ENCODE measurements at regions of chr1 and their contacts with region 1.

Region 1: GRCh38 chr1:204928671-204929486 is 58.2 kb downstream of the NFASC start:
- DNase-seq: no peak
- ATAC-seq: no peak
- H3K4me3 Mint-ChIP-seq: no peak overlapping the region
- H3K27ac Mint-ChIP-seq: no peak overlapping the region
- H3K4me1 Mint-ChIP-seq: no peaks in the 10 kb centered on the region
- H3K27me3 Mint-ChIP-seq: peaks cover 18% of the 10 kb centered on the region

Region 2: DNA sequence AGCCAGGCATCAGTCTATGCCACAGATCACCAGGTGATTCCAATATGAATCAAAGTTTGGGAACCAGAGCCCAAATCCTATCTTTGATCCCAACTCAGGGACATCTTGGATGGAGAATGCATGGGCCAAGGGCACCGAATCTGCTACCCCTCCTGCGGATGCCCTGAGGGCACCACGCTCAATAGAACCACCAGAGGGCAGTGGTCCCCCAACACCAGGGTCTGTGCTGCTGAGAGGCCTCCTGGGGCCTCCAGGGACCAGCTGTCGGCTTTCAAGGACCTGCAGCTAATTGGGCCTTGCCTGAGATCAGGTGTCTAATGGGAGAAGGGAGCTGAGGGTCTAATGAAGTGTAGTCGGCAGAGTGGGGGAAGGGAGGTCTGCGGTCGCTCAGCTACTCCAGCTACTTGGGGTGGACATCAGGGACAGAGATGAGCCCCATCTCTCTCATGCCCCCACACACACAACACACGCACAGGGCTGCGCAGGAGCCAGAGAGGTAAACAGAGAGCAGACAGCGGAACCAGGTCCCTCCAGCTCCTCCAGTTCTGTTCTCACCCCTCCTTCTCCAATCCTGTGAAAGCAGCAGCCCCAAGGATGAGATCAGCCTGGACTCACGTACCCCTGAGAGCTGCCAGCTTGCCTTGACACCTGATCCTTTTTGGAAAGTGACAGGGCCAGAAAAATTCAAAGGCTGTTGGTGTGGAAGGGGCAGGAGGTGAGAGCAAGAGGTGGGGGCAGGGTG is 482.3 kb before region 1 on chr1:
- CTCF ChIA-PET with region 1: no interaction called
- DNase-seq: peak; percentile 84
- ATAC-seq: peak; percentile 93
- H3K4me3 Mint-ChIP-seq: no peak overlapping the region
- H3K27ac Mint-ChIP-seq: peak overlapping the region; percentile 74
- H3K4me1 Mint-ChIP-seq: peaks cover 33% of the 10 kb centered on the region
- H3K27me3 Mint-ChIP-seq: no peaks in the 10 kb centered on the region

Region 3: DNA sequence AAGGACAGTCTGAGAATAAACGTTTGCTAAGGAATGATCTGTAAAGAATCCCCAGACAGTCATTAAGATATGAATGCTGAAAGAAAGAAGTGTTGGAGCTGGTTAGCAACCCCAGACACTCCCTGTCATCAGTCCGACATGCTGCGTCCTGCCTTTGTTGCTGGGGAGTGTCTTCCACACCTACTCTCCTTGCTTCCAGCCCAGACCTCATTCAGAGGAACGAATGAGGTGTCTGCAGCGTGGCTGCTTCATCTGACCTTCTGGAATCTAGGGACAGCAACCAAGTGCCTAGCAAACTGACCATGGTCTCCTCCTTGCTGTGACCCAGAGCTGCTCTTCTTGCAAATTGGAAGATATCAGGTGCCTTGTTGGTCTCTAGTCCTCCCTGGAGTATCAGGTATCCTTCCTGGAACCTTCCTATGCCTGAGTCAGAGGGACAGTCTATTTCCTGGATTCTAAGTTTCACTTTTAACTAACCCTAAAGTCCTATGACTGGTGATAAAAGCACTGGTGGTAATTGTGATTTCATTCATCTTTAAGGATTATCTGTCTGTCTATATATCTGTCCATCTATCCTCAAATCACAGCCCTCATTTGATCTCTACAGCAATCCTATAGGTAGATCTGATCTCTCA is 12.9 kb before region 1 on chr1:
- CTCF ChIA-PET with region 1: no interaction called
- DNase-seq: no peak
- ATAC-seq: no peak
- H3K4me3 Mint-ChIP-seq: no peak overlapping the region
- H3K27ac Mint-ChIP-seq: no peak overlapping the region
- H3K4me1 Mint-ChIP-seq: peaks cover 2% of the 10 kb centered on the region
- H3K27me3 Mint-ChIP-seq: peaks cover 25% of the 10 kb centered on the region

Region 4: GRCh38 chr1:204941421-204942338 is 12.8 kb after region 1 on chr1:
- CTCF ChIA-PET with region 1: interaction called, 10 read pairs
- DNase-seq: peak; percentile 72
- ATAC-seq: peak; percentile 63
- H3K4me3 Mint-ChIP-seq: no peak overlapping the region
- H3K27ac Mint-ChIP-seq: no peak overlapping the region
- H3K4me1 Mint-ChIP-seq: peaks cover 5% of the 10 kb centered on the region
- H3K27me3 Mint-ChIP-seq: peaks cover 17% of the 10 kb centered on the region